Heart left ventricle (tissue), 16 donors: ENCODE measurements at regions of chrX and their contacts with region 1.

Region 1: DNA sequence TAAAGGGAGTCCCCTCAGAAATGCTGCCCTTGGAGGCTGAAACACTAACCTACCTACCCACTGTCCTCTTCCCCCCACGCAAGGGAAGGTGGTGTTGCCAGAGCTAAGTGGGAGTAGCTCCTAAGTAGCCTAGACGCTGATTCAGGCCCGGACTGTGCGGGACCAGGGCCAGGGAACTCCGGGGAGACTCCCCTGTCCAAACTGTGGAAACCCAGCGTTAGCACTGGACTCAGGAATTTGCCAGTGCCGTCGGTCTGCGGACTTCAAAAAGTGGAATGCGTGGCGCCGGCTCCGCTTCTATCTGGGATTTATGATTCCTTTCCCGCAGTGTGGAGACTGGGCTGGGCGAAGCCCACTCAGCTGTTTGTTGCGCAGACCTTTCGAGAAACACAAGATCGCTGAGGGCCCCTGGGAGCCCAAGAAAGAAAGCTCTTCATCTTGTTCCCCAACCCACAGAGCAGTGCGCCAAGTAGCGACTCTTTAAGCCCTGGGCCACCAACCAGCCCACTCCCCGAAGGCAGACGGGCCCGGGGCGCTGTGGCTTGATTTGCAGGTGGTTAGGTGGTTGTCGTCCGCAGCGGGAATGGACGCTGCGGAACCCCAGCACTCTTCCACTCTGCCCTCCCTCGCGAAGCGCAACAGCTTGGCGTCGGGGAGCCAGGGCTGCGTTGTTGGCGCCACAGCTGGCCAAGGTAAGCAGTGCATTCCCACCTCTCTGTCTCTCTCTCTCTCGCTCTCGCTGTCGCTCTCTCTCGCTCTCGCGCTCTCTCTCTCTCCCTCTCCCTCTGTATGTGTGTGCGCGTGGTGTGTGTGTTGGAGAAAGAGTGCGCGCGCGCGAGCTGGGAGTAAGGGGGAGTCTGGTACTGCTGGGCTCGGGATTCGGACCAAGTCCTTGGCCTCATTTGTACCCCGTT is 2.0 kb downstream of the TMEM255A start:
- DNase-seq: peak; percentile 43 to 70 (median 44)
- ATAC-seq: peak; percentile 61 to 85 (median 78)
- H3K4me3 ChIP-seq: peak overlapping the region; percentile 3 to 49 (median 39)
- H3K27ac ChIP-seq: no peak overlapping the region
- H3K4me1 ChIP-seq: peaks cover 0 to 22% (median 9%) of the 10 kb centered on the region in 12 donors
- H3K27me3 ChIP-seq: peaks cover 0 to 71% (median 8%) of the 10 kb centered on the region in 9 donors
- CTCF ChIP-seq: peak in 7 of 12 donors; percentile 6 to 39 (median 35)
- POLR2A ChIP-seq: no peak

Region 2: GRCh38 chrX:120244735-120245498 is 64.3 kb before region 1 on chrX:
- intact Hi-C with region 1: loop called in 5 of 10 experiments (anchors 5 to 10 kb)
- DNase-seq: peak; percentile 66 to 82 (median 74)
- ATAC-seq: peak; percentile 87 to 96 (median 92)
- H3K4me3 ChIP-seq: peak overlapping the region; percentile 51 to 95 (median 70)
- H3K27ac ChIP-seq: peak overlapping the region; percentile 65 to 90 (median 84)
- H3K4me1 ChIP-seq: peaks cover 0 to 13% (median 6%) of the 10 kb centered on the region in 12 donors
- H3K27me3 ChIP-seq: peaks cover 0 to 3% (median 0%) of the 10 kb centered on the region in 9 donors
- CTCF ChIP-seq: no peak
- POLR2A ChIP-seq: no peak

Region 3: GRCh38 chrX:120250522-120251271 is 58.5 kb before region 1 on chrX and contains the start of gene ZBTB33:
- intact Hi-C with region 1: loop called in 5 of 10 experiments (anchors 5 to 10 kb)
- DNase-seq: peak; percentile 91 to 94 (median 93)
- ATAC-seq: peak; percentile 99 to 100 (median 99)
- H3K4me3 ChIP-seq: peak within 1 kb of the TSS; percentile 50 to 95 (median 72)
- H3K27ac ChIP-seq: peak within 1 kb of the TSS; percentile 55 to 94 (median 88)
- H3K4me1 ChIP-seq: peaks cover 0 to 14% (median 0%) of the 10 kb centered on the region in 12 donors
- H3K27me3 ChIP-seq: peaks cover 0 to 3% (median 0%) of the 10 kb centered on the region in 9 donors
- CTCF ChIP-seq: peak; percentile 44 to 80 (median 62)
- POLR2A ChIP-seq: peak in 1 of 2 donors; percentile 8
- total RNA-seq, gene ZBTB33: 5.3 to 8.9 (median 7.1) TPM

Region 4: GRCh38 chrX:120457766-120458180 is 148.6 kb after region 1 on chrX:
- intact Hi-C with region 1: loop called in 2 of 10 experiments (anchors 5 to 10 kb)
- DNase-seq: no peak
- ATAC-seq: no peak
- H3K4me3 ChIP-seq: no peak overlapping the region
- H3K27ac ChIP-seq: peak overlapping the region in 1 of 12 donors; percentile 28
- H3K4me1 ChIP-seq: peaks cover 0 to 38% (median 2%) of the 10 kb centered on the region in 12 donors
- H3K27me3 ChIP-seq: no peaks in the 10 kb centered on the region
- CTCF ChIP-seq: no peak
- POLR2A ChIP-seq: no peak

Region 5: GRCh38 chrX:120463241-120463640 is 154.0 kb after region 1 on chrX:
- intact Hi-C with region 1: loop called in 2 of 10 experiments (anchors 5 to 10 kb)
- DNase-seq: no peak
- ATAC-seq: peak in 1 of 4 donors; percentile 45
- H3K4me3 ChIP-seq: no peak overlapping the region
- H3K27ac ChIP-seq: no peak overlapping the region
- H3K4me1 ChIP-seq: peaks cover 0 to 65% (median 18%) of the 10 kb centered on the region in 12 donors
- H3K27me3 ChIP-seq: no peaks in the 10 kb centered on the region
- CTCF ChIP-seq: no peak
- POLR2A ChIP-seq: no peak

Region 6: GRCh38 chrX:120477453-120477852 is 168.2 kb after region 1 on chrX:
- intact Hi-C with region 1: loop called in 1 of 10 experiments (anchors 10 kb)
- DNase-seq: no peak
- ATAC-seq: no peak
- H3K4me3 ChIP-seq: no peak overlapping the region
- H3K27ac ChIP-seq: no peak overlapping the region
- H3K4me1 ChIP-seq: no peaks in the 10 kb centered on the region
- H3K27me3 ChIP-seq: peaks cover 0 to 10% (median 0%) of the 10 kb centered on the region in 9 donors
- CTCF ChIP-seq: no peak
- POLR2A ChIP-seq: no peak

Region 7: DNA sequence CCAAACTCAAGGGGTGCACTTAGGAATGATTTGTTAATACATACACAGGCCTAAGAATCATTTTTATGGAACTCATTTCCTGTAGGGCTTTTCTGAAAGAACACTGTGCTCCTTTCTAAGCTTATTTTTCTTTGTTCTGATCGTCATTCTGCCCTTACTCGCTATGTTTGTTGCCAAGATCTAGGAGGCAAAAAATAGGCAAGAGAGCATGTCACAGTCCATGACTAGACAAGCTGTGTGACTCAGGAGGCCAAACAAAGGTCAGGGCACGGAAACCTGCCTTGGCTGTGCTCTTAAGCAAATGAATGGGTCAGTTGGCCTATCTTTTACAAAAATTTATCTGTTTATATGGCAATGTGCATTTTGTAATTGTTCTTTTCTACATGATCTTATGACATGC is 363.2 kb after region 1 on chrX:
- intact Hi-C with region 1: no loop called
- DNase-seq: peak in 4 of 5 donors; percentile 12 to 68 (median 28)
- ATAC-seq: peak; percentile 90 to 96 (median 93)
- H3K4me3 ChIP-seq: no peak overlapping the region
- H3K27ac ChIP-seq: peak overlapping the region; percentile 20 to 75 (median 56)
- H3K4me1 ChIP-seq: peaks cover 0 to 16% (median 8%) of the 10 kb centered on the region in 12 donors
- H3K27me3 ChIP-seq: no peaks in the 10 kb centered on the region
- CTCF ChIP-seq: no peak
- POLR2A ChIP-seq: no peak

Region 8: GRCh38 chrX:120690344-120690743 is 381.1 kb after region 1 on chrX:
- intact Hi-C with region 1: no loop called
- DNase-seq: no peak
- ATAC-seq: no peak
- H3K4me3 ChIP-seq: no peak overlapping the region
- H3K27ac ChIP-seq: no peak overlapping the region
- H3K4me1 ChIP-seq: no peaks in the 10 kb centered on the region
- H3K27me3 ChIP-seq: no peaks in the 10 kb centered on the region
- CTCF ChIP-seq: no peak
- POLR2A ChIP-seq: no peak